ENCODE measurements at regions of chr19 and their contacts with region 1.

Region 1: DNA sequence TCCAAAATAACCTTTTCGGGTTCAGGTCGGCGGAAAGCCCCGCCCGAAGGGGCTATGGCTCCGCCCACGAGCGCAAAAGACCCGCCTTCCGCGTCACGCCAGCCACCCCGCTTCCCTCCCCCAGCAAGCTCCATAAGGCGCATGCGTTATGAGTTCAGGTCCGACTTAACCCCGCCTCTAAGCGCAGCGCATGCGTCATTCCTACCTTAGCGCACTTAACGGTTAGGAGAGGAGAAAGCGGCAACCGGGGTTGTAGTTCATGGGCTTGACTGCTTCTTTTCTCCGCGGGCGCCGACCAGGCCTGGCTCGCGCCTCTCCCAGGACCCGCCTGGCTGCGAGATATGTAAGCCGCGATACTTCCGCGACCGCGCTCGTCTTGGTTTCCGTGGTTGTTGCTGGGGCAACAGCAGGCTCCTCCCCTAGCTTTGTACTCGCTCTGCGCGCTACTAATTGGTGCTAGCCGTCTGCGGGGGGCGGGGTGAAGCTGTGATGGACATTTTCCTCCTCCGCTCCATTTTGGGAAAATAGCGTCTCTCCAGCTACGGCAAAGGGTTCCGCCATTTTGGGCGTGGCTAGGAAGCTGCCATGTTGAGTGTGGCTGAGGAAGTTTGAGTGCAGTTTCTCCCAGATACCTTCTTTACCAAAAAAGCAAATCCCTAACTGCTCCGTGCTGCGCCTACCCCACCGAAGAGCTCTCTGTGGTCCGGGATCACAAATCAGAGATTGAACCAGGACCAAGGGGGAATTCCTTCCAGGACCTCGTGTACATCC is at the start of gene B9D2:
- DNase-seq: peak; percentile 95 to 98 (median 98)
- H3K4me3 ChIP-seq: peak within 1 kb of the TSS; percentile 52 to 98 (median 82)
- H3K27ac ChIP-seq: peak within 1 kb of the TSS; percentile 80 to 100 (median 98)
- H3K27me3 ChIP-seq: no peaks in the 10 kb centered on the region
- CTCF ChIP-seq: peak in 13 of 56 donors; percentile 6 to 42 (median 27)
- total RNA-seq, gene B9D2: 3.0 to 12.9 (median 6.6) TPM

Region 2: DNA sequence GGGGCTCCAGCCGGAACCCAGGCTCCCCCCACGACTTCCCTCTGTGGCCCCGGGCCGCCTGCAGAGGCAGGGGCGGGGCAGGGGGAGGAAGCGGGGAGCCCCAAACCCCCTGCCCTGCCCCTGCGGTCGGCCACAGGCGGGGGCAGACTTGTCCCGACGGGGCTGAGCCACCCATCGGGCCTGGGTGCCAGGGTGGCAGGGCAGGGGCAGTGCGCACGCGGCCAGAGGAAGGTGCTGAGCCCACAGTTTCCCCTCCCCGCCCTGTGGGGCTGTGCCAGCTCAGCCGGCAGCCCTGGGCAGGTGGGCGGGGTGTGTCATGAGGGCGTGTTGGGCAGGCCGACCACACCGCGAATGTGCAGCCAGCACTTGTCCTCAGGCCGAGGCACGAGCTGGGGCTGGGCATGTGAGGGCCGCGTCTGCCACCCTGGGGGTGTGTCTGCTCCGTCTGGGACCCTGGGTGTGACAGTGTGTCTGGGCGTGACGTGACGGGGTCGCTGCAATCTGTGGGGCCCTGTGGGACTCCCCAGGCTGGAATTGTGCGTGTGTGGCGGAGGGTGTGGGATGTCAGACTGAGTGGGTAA is 36.3 kb before region 1 on chr19:
- intact Hi-C with region 1: no loop called
- DNase-seq: peak in 1 of 10 donors; percentile 27
- H3K4me3 ChIP-seq: peak overlapping the region in 27 of 59 donors; percentile 1 to 49 (median 20)
- H3K27ac ChIP-seq: peak overlapping the region in 57 of 59 donors; percentile 33 to 94 (median 85)
- H3K27me3 ChIP-seq: peaks cover 0 to 12% (median 0%) of the 10 kb centered on the region in 45 donors
- CTCF ChIP-seq: no peak

Region 3: DNA sequence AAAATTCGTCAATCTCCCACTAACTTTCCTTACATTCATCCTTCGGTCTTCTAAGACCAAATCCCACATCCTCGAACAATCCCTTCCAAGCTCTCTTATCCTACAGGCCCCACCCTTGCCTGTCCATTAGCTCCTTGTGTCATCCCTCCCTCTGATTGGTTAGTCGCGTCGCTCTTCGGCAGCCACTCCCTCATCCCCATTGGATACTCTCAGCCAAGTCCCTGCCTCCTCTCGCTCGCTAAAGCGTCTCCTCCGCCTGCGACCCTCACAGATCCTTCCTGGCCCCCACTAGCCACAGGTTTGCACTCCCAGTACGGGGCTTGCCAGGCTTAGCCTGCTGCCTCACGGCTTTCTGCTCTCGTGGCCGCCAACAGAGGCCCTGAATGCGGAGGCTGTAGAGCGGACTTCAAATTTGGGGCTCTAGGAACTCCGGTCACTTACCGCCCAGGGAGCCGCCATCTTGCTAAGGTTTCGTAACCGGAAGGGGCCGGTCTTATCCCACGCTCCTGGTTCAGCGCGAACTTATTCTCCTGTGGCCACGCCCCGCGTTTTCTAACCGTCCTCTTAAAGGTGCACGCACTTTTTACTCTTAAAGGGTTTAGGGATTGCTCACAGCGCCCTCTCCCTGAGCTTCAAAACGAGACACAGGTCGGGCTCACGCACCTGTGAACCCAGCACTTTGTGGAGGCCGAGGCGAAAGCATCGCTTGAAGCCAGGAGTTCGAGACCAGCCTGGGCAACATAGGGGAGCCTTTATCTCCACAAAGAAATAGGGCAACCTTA is 75.7 kb after region 1 on chr19 and contains the start of gene DMAC2:
- intact Hi-C with region 1: loop called in 1 of 2 experiments (anchors 5 kb)
- DNase-seq: peak; percentile 89 to 98 (median 97)
- H3K4me3 ChIP-seq: peak within 1 kb of the TSS; percentile 37 to 96 (median 84)
- H3K27ac ChIP-seq: peak within 1 kb of the TSS; percentile 68 to 99 (median 94)
- H3K27me3 ChIP-seq: peaks cover 0 to 8% (median 0%) of the 10 kb centered on the region in 45 donors
- CTCF ChIP-seq: peak in 54 of 56 donors; percentile 13 to 69 (median 50)
- total RNA-seq, gene DMAC2: 29.5 to 57.2 (median 42.7) TPM

Region 4: DNA sequence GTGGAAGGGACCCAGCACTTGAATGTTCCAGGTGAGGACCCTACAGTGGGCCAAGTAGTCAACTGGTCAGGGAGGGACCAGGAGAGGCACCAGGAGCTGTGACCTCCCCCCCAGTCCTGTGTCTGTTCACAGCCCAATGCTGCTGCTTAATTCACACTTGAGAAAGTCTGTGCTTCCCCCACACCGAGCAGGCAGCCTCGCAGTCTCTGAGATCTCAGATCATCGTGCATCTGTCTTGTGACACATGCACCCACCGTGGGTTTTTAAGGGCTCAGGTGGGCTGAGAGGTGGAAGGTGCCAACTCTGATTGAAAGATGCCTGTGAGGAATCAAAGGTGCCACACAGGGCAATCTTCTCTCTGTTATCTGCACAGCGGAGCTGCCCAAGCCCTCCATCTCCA is 350.7 kb after region 1 on chr19:
- intact Hi-C with region 1: no loop called
- DNase-seq: no peak
- H3K4me3 ChIP-seq: no peak overlapping the region
- H3K27ac ChIP-seq: no peak overlapping the region
- H3K27me3 ChIP-seq: peaks cover 0 to 56% (median 13%) of the 10 kb centered on the region in 45 donors
- CTCF ChIP-seq: no peak

Measured in dorsolateral prefrontal cortex (tissue), 120 donors.